Transverse colon (tissue), 4 donors: ENCODE measurements at regions of chr12 and their contacts with region 1.

Region 1: GRCh38 chr12:10749700-10750384 is 26.7 kb upstream of the YBX3 start:
- DNase-seq: peak; percentile 75
- H3K4me3 ChIP-seq: peak overlapping the region in 2 of 4 donors; percentile 15 to 22
- H3K27ac ChIP-seq: peak overlapping the region in 3 of 4 donors; percentile 33 to 59 (median 53)
- H3K4me1 ChIP-seq: peaks cover 0 to 8% (median 2%) of the 10 kb centered on the region in 4 donors
- H3K27me3 ChIP-seq: no peaks in the 10 kb centered on the region
- CTCF ChIP-seq: peak; percentile 80 to 94 (median 84)
- EP300 ChIP-seq: peak; percentile 65
- POLR2A ChIP-seq: no peak

Region 2: GRCh38 chr12:10235761-10236631 is 513.8 kb before region 1 on chr12:
- in situ Hi-C with region 1: loop called in 2 of 4 experiments (anchors 25 kb)
- intact Hi-C with region 1: no loop called
- DNase-seq: no peak
- H3K4me3 ChIP-seq: no peak overlapping the region
- H3K27ac ChIP-seq: no peak overlapping the region
- H3K4me1 ChIP-seq: no peaks in the 10 kb centered on the region
- H3K27me3 ChIP-seq: no peaks in the 10 kb centered on the region
- CTCF ChIP-seq: peak; percentile 80 to 86 (median 85)
- EP300 ChIP-seq: no peak
- POLR2A ChIP-seq: no peak

Region 3: GRCh38 chr12:10613349-10614055 is 136.3 kb before region 1 on chr12 and contains the start of gene MAGOHB:
- in situ Hi-C with region 1: loop called in 1 of 4 experiments (anchors 25 kb)
- intact Hi-C with region 1: loop called (anchors 10 kb)
- DNase-seq: peak; percentile 98
- H3K4me3 ChIP-seq: peak within 1 kb of the TSS; percentile 70 to 96 (median 84)
- H3K27ac ChIP-seq: peak within 1 kb of the TSS; percentile 85 to 96 (median 92)
- H3K4me1 ChIP-seq: peaks cover 8 to 22% (median 13%) of the 10 kb centered on the region in 4 donors
- H3K27me3 ChIP-seq: no peaks in the 10 kb centered on the region
- CTCF ChIP-seq: peak in 1 of 5 experiments; percentile 30
- EP300 ChIP-seq: no peak
- POLR2A ChIP-seq: peak; percentile 79
- total RNA-seq, gene MAGOHB: 0.75 to 9.7 (median 8.1) TPM in 3 of 4 donors, not detected in the other

Region 4: GRCh38 chr12:11183011-11183410 is 433.2 kb after region 1 on chr12:
- in situ Hi-C with region 1: no loop called
- intact Hi-C with region 1: no loop called
- DNase-seq: no peak
- H3K4me3 ChIP-seq: no peak overlapping the region
- H3K27ac ChIP-seq: no peak overlapping the region
- H3K4me1 ChIP-seq: no peaks in the 10 kb centered on the region
- H3K27me3 ChIP-seq: no peaks in the 10 kb centered on the region
- CTCF ChIP-seq: no peak
- EP300 ChIP-seq: no peak
- POLR2A ChIP-seq: no peak

Region 5: DNA sequence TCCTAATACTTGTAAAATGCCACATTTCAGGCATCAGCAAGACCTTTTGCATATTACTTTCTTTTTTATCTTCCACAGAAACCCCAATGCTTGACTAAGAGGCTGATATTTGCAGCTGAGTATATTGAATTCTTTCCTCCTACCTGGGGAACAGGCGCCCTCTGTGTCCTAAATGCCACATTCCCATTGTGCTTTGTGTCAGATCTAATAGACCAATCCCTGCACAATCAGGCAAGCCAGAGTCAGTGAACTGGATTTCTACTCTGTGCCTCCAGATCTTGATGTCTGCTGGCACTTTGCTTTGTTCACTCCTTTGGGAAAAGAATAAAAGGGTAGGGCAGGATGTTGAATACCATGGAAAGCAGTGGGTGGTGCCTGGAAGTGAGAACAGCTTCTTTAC is 459.3 kb after region 1 on chr12:
- in situ Hi-C with region 1: loop called in 1 of 4 experiments (anchors 25 kb)
- intact Hi-C with region 1: no loop called
- DNase-seq: no peak
- H3K4me3 ChIP-seq: no peak overlapping the region
- H3K27ac ChIP-seq: no peak overlapping the region
- H3K4me1 ChIP-seq: no peaks in the 10 kb centered on the region
- H3K27me3 ChIP-seq: no peaks in the 10 kb centered on the region
- CTCF ChIP-seq: no peak
- EP300 ChIP-seq: no peak
- POLR2A ChIP-seq: no peak